H1 (cell line): ENCODE measurements at regions of chr1 and their contacts with region 1.

Region 1: GRCh38 chr1:193121616-193122593 is at the start of gene CDC73:
- DNase-seq: peak; percentile 83 to 99
- H3K4me3 ChIP-seq: peak within 1 kb of the TSS; percentile 83 to 97 (median 95)
- H3K27ac ChIP-seq: peak within 1 kb of the TSS; percentile 95
- H3K4me1 ChIP-seq: no peaks in the 10 kb centered on the region; a peak in 1 of 7 replicates
- H3K27me3 ChIP-seq: no peaks in the 10 kb centered on the region
- CTCF ChIP-seq: peak; percentile 87 to 89 (median 88)
- EP300 ChIP-seq: peak in 1 of 2 experiments; percentile 64; a peak in 1 of 3 replicates
- POLR2A ChIP-seq: peak; percentile 78 to 87
- RAD21 ChIP-seq: peak; percentile 75 to 77
- total RNA-seq, gene CDC73: 61.2 and 64.0 TPM in 2 replicates

Region 2: DNA sequence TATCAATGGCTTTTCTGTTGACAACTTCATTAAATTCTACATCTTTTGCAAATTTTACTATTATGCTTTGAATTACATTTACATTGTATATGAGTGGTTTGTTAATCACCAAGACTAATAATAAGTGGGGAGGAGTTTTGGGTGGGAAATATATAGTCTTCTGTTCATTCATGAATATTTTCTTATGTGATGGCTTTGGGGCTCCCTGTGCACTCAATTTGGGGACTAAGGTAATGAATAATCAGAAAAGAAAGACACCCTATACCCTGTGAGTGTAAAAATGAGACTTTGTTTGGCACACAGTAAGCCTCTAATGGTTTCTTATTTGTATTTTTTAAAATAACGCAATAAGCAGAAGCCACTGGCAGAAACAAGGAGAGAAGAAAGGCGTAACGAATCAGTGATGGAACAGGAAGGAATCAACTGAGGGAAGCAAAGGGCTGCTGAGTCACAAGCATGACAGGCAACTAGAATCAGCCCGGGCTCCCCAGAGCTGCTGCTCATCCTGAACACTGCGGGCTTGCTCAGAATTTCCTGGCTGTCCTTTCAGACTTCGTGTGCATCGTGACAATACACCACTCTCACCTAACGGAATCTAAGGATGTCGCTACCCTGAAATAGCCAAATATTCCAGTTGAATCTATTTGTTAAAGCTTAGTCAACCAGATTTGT is 333.9 kb before region 1 on chr1:
- CTCF ChIA-PET with region 1: no interaction called
- POLR2A ChIA-PET with region 1: no interaction called
- DNase-seq: no peak
- H3K4me3 ChIP-seq: no peak overlapping the region
- H3K27ac ChIP-seq: no peak overlapping the region
- H3K4me1 ChIP-seq: peaks cover 0 to 3% (median 0%) of the 10 kb centered on the region in 4 experiments; a peak in 1 of 7 replicates
- H3K27me3 ChIP-seq: no peaks in the 10 kb centered on the region
- CTCF ChIP-seq: no peak
- EP300 ChIP-seq: no peak
- POLR2A ChIP-seq: no peak
- RAD21 ChIP-seq: no peak

Region 3: GRCh38 chr1:193059268-193060225 is 62.4 kb before region 1 on chr1 and contains the starts of genes RO60 and UCHL5:
- CTCF ChIA-PET with region 1: no interaction called
- POLR2A ChIA-PET with region 1: interaction called, 15 read pairs
- DNase-seq: peak; percentile 93 to 94
- H3K4me3 ChIP-seq: peak within 1 kb of the TSS; percentile 94 to 96 (median 94)
- H3K27ac ChIP-seq: peak within 1 kb of the TSS; percentile 92
- H3K4me1 ChIP-seq: peaks cover 0 to 5% (median 3%) of the 10 kb centered on the region in 4 experiments; a peak in 3 of 7 replicates
- H3K27me3 ChIP-seq: no peaks in the 10 kb centered on the region
- CTCF ChIP-seq: no peak
- EP300 ChIP-seq: peak; percentile 8 to 84; a peak in 2 of 3 replicates
- POLR2A ChIP-seq: peak; percentile 59 to 90
- RAD21 ChIP-seq: peak; percentile 0 to 12; a peak in 2 of 4 replicates
- total RNA-seq, gene RO60: 88.0 and 103 TPM in 2 replicates
- total RNA-seq, gene UCHL5: 34.4 and 40.0 TPM in 2 replicates

Region 4: DNA sequence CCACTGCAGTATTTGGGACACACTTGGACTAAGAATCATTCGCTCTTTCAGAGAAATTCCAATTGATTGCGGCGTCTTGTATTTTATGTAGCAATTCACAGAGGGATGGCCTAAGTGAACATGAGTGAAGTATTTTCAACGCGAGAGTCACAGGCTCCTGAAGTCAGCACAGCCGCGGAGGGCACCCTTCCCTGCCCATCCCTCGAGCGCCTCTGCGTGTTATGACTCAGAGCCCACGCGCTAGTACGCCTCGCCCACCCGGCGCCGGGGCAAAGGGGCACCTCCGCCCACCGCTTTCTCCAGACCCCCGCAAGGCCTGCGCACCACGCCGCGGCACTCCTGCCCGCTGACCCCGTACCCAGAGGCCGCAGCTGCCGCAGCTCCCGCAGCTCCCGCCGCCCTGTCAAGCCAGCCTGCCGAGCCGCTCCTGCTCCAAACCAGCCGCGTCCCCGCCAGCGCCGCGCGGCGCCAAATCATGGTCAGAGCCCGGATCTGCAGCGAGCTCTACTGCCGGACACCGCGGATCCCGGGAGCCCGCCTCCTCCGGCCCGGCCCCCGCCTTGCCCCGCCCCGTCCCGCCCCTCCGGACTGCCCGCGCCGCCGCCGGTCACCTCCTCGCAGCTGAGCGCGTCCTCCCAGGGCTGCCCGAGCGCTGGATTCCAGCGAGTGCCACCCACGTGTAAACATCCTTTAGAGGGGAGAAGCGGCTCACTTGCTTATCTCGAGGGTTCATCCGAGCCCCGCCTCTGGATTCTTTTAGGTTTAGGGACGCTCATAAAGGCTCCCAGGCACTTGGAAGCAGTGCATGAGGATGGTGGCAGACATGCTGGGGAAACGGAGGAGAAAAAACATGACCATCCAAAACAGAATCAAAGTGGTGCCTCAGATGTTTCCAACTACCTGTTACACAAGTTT is 16.7 kb before region 1 on chr1 and contains the start of gene GLRX2:
- CTCF ChIA-PET with region 1: interaction called, 10 read pairs
- POLR2A ChIA-PET with region 1: interaction called, 21 read pairs
- DNase-seq: peak in 1 of 2 experiments; percentile 86
- H3K4me3 ChIP-seq: peak within 1 kb of the TSS; percentile 67 to 82 (median 76)
- H3K27ac ChIP-seq: 0 out of 2 replicates have a peak within 1 kb of the TSS, but pooled peaks have one; percentile 42
- H3K4me1 ChIP-seq: peaks cover 0 to 5% (median 2%) of the 10 kb centered on the region in 4 experiments; a peak in 4 of 7 replicates
- H3K27me3 ChIP-seq: peaks cover 0 to 11% (median 4%) of the 10 kb centered on the region in 4 experiments; a peak in 4 of 7 replicates
- CTCF ChIP-seq: no peak
- EP300 ChIP-seq: no peak
- POLR2A ChIP-seq: peak; percentile 45 to 53; a peak in 1 of 3 replicates
- RAD21 ChIP-seq: peak; percentile 5 to 26; a peak in 2 of 4 replicates
- total RNA-seq, gene GLRX2: 13.5 and 14.2 TPM in 2 replicates

Region 5: GRCh38 chr1:193111641-193112090 is 10.2 kb before region 1 on chr1:
- CTCF ChIA-PET with region 1: interaction called, 6 read pairs
- POLR2A ChIA-PET with region 1: interaction called, 27 read pairs
- DNase-seq: no peak
- H3K4me3 ChIP-seq: no peak overlapping the region
- H3K27ac ChIP-seq: no peak overlapping the region
- H3K4me1 ChIP-seq: peaks cover 0 to 17% (median 4%) of the 10 kb centered on the region in 4 experiments; a peak in 5 of 7 replicates
- H3K27me3 ChIP-seq: peaks cover 0 to 1% (median 0%) of the 10 kb centered on the region in 4 experiments; a peak in 1 of 7 replicates
- CTCF ChIP-seq: no peak
- EP300 ChIP-seq: no peak
- POLR2A ChIP-seq: no peak
- RAD21 ChIP-seq: no peak

Region 6: DNA sequence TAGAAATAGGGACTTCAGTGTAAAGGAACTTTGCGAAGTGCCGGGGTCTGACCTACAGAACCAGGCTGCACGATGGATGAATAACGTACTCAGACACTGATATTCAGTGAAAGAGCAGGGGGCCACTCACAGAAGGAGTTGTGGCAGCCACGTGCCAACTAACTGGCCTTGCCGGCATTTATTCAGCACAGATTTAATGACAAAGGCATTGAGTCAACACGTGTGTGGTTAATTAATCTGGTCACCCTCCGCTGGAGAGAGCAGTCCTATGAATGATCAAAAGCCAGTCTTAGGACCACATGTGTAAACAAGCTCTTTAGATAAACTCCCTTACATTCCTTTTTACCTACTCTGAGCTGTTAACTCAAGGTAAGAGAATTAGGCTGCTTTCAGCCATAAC is 70.7 kb after region 1 on chr1:
- CTCF ChIA-PET with region 1: no interaction called
- POLR2A ChIA-PET with region 1: no interaction called
- DNase-seq: no peak
- H3K4me3 ChIP-seq: no peak overlapping the region
- H3K27ac ChIP-seq: no peak overlapping the region
- H3K4me1 ChIP-seq: no peaks in the 10 kb centered on the region
- H3K27me3 ChIP-seq: no peaks in the 10 kb centered on the region
- CTCF ChIP-seq: no peak
- EP300 ChIP-seq: no peak
- POLR2A ChIP-seq: no peak
- RAD21 ChIP-seq: no peak